Posterior vena cava (tissue), 2 donors: ENCODE measurements at regions of chr2 and their contacts with region 1.

Region 1: GRCh38 chr2:190534310-190535120 is at the start of gene NEMP2:
- DNase-seq: peak; percentile 94
- total RNA-seq, gene NEMP2: 5.0 to 6.8 TPM

Region 2: DNA sequence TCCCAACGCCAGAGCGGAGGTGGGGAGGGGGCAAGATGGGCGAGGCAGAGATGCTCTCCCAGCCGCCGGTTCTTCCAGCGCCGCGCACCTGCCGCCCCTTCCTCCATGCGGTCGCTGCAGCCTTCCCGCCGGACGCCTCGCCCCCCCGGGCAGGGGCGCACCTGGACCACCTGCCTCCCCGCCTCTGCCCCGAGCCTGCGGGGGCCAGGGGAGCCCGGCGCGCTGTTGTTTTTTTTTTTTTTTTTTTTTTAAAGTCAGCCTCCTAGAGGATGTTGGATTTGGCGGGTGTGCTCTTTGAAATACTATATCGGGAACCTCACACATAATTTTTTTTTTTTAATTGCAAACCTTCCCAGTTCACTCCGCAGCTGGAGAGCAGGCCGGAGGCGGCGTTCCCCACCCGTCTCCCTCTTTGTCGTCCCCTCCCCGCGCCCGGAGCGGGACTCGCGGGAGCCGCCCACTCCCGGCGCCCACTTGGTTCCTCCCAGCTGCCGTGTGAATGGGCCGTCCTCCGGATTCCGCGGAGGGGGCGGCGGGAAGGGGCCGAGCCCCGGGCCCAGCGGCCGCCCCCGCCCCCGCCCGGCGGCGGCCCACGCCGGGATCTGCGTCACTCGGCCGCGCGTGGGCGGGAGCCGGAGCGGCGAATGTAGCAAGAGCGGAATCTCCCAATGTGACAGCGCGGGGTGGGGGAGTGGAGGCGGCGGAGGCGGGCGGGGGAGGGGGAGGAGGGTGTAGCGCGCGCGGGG is 113.9 kb after region 1 on chr2:
- intact Hi-C with region 1: loop called in 1 of 2 experiments (anchors 5 kb)
- DNase-seq: peak; percentile 96